Pancreas (tissue), 10 donors: ENCODE measurements at regions of chr11 and their contacts with region 1.

Region 1: GRCh38 chr11:35144136-35144741 is 5.3 kb downstream of the CD44 start:
- DNase-seq: no peak
- ATAC-seq: no peak
- H3K4me3 ChIP-seq: peak overlapping the region in 1 of 4 donors; percentile 92
- H3K27ac ChIP-seq: peak overlapping the region in 2 of 4 donors; percentile 13 to 20
- H3K4me1 ChIP-seq: peaks cover 6 to 38% (median 17%) of the 10 kb centered on the region in 3 donors
- H3K27me3 ChIP-seq: no peaks in the 10 kb centered on the region
- CTCF ChIP-seq: no peak

Region 2: GRCh38 chr11:35006389-35007128 is 137.7 kb before region 1 on chr11:
- intact Hi-C with region 1: loop called in 2 of 3 experiments (anchors 10 kb)
- DNase-seq: no peak
- ATAC-seq: no peak
- H3K4me3 ChIP-seq: no peak overlapping the region
- H3K27ac ChIP-seq: peak overlapping the region; percentile 10 to 85 (median 59)
- H3K4me1 ChIP-seq: peaks cover 40 to 56% (median 55%) of the 10 kb centered on the region in 3 donors
- H3K27me3 ChIP-seq: no peaks in the 10 kb centered on the region
- CTCF ChIP-seq: no peak

Region 3: GRCh38 chr11:35174666-35175065 is 30.4 kb after region 1 on chr11:
- intact Hi-C with region 1: loop called in 1 of 3 experiments (anchors 5 kb)
- DNase-seq: no peak
- ATAC-seq: peak in 2 of 4 donors; percentile 17 to 25
- H3K4me3 ChIP-seq: no peak overlapping the region
- H3K27ac ChIP-seq: peak overlapping the region in 2 of 4 donors; percentile 24 to 28
- H3K4me1 ChIP-seq: peaks cover 25 to 55% (median 26%) of the 10 kb centered on the region in 3 donors
- H3K27me3 ChIP-seq: no peaks in the 10 kb centered on the region
- CTCF ChIP-seq: no peak

Region 4: DNA sequence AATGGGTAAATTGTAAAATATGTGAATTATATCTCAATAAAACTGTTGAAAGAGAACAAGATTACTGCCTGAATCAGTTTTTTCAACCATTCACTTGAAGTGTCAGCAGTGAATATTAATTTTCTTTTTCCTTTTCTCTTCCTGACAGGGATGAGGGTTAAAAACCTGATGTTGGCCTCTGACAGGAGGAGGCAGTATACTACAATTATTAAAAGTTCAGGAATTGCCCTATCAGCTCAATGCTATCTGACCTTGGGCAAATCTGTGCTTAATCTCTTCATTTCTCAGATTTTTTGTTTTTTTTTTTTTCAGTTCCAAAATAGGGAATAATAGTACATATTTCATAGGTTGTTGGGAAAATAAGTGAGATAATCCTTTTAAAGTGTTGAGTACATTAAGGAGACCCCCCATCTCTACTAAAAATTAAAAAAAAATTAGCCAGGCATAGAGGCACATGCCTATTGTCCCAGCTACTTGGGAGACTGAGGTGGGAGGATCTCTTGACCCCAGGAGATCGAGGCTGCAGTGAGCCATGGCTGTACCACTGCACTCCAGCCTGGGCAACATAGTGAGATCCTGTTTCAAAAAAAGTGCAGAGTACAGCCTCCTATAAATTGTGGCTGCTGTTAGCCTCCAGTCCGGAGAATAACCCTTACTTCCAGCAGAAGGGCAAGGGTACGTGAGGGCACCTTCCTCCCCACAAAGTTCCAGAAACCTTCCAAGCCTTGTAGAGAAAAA is 567.1 kb after region 1 on chr11:
- intact Hi-C with region 1: no loop called
- DNase-seq: no peak
- ATAC-seq: peak; percentile 71 to 91 (median 81)
- H3K4me3 ChIP-seq: no peak overlapping the region
- H3K27ac ChIP-seq: no peak overlapping the region
- H3K4me1 ChIP-seq: peaks cover 0 to 8% (median 0%) of the 10 kb centered on the region in 3 donors
- H3K27me3 ChIP-seq: no peaks in the 10 kb centered on the region
- CTCF ChIP-seq: no peak